Lower leg skin (tissue), 4 donors: ENCODE measurements at regions of chr17 and their contacts with region 1.

Region 1: GRCh38 chr17:79552405-79552804 is 58.4 kb downstream of the RBFOX3 start:
- DNase-seq: no peak
- H3K4me3 ChIP-seq: no peak overlapping the region
- CTCF ChIP-seq: no peak
- POLR2A ChIP-seq: no peak

Region 2: DNA sequence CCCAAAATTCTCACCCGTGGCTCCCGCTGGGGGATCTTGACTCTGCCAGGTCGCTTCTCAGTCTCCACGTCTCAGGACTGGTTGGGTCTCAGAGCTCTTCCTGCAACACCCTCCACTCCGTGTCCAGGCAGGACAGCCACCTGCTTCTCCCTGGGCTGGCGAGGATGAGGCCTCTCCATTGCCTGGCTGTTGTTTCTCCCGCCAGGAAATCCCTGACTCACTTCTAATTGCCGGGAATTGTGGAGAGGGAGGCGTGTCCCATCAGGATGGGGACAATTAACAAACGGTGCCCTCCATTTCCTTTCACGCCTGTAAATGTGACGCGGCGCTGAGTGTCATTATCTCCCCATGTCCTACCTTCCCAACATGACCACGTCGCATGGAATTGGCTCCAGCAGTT is 146.1 kb before region 1 on chr17:
- intact Hi-C with region 1: no loop called
- DNase-seq: no peak
- H3K4me3 ChIP-seq: no peak overlapping the region
- CTCF ChIP-seq: no peak
- POLR2A ChIP-seq: no peak

Region 3: GRCh38 chr17:79453481-79453880 is 98.9 kb before region 1 on chr17:
- intact Hi-C with region 1: loop called (anchors 5 kb)
- DNase-seq: no peak
- H3K4me3 ChIP-seq: no peak overlapping the region
- CTCF ChIP-seq: no peak
- POLR2A ChIP-seq: no peak